ENCODE measurements at regions of chrX and their contacts with region 1.

Region 1: GRCh38 chrX:9995855-9996339 is 28.7 kb downstream of the CLDN34 start:
- DNase-seq: peak; percentile 68 to 96
- H3K4me3 ChIP-seq: no peak overlapping the region
- CTCF ChIP-seq: peak in 1 of 3 donors; percentile 92
- POLR2A ChIP-seq: no peak

Region 2: DNA sequence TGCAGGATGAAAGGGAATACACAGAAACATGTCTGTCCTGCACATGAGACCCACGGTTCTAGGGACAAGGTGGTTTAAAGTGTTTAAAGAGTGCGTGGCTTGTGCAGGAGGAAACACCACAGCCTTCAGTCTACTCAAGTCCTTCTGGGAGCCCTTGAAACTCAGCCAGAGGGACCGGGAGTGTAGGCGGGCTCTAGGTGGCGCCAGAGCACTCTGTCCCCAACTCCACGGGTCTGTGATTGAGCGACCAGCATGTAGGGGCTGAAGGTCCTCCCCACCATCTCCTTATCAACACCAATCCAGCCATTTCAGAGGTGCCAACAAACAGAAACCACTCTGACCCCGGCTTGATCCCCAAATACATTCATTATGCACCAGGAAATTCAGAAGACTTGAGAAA is 110.7 kb before region 1 on chrX:
- intact Hi-C with region 1: loop called (anchors 10 kb)
- DNase-seq: peak in 1 of 2 donors; percentile 16
- H3K4me3 ChIP-seq: no peak overlapping the region
- CTCF ChIP-seq: no peak
- POLR2A ChIP-seq: no peak

Region 3: DNA sequence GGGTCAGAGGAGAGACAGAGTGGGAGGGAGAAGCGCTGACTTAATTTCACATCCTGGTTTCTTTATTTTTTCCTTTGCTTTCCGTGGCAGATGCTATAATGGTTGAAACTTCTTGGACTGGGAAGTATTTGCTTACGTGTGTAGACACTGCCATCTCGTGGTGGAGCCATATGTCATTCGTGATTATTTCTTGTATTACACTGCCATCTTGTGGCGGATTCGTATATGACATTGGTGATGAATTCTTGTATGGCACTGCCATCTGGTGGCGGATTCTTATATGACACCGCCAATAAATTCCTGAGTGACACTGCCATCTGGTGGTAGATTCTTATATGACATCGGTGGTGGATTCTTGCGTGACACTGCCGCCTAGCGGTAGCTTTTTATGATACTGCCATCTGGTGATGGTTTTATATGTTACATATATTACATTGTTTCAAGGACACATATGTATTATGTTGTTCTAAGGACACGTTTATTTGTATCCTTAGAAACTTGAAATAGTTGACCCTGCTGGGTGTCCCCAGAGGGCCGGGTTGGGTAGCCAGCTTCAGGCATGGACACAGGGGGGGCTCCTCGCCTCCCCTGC is 123.6 kb after region 1 on chrX:
- intact Hi-C with region 1: loop called (anchors 2 kb)
- DNase-seq: peak; percentile 78 to 89
- H3K4me3 ChIP-seq: no peak overlapping the region
- CTCF ChIP-seq: peak in 2 of 3 donors; percentile 99 to 100
- POLR2A ChIP-seq: no peak